ENCODE measurements at regions of chr1 and their contacts with region 1.

Region 1: DNA sequence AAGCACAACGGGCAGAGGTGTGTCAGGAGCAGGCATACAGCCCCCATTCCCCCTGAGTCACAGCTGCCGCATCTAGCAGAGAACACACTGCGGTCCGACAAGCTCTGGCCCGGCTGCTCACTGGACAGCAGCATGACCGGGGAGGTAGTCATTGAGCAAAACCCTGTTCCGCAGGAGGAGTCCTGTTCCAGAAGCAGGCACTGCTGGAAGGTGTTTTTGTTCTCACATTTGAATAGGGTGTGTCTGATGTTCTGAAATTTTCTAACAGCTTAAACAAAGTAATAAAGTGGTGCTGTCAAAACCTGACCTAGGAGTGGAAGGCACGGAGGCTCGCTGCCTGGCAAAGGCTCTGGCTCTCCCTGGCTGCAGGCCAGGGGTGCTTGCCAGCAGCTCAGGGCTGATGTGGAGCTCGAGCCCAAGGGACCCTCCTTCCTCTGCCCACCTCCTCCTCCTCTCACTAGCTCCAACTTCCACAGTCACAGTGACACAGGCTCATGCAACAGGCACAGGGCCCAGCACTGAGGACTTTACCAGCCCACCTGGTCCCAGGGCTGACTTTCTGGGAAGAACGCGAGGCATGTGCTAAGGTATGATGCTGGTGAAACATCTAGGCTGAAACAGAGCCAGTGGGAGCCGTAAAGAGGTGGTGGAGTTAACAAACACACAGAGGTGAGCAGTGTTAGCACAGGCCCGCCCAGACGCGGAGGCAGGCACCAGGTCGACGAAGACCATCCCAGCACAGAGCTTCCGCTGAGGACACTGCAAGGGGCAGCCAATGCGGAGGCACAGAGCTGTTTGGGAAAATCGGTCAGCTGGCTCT is 118.6 kb upstream of the IFFO2 start:
- DNase-seq: peak; percentile 91
- H3K4me3 Mint-ChIP-seq: peak overlapping the region; percentile 11
- H3K27ac Mint-ChIP-seq: peak overlapping the region; percentile 90
- H3K4me1 Mint-ChIP-seq: peaks cover 21% of the 10 kb centered on the region
- H3K27me3 Mint-ChIP-seq: no peaks in the 10 kb centered on the region
- CTCF ChIP-seq: no peak

Region 2: DNA sequence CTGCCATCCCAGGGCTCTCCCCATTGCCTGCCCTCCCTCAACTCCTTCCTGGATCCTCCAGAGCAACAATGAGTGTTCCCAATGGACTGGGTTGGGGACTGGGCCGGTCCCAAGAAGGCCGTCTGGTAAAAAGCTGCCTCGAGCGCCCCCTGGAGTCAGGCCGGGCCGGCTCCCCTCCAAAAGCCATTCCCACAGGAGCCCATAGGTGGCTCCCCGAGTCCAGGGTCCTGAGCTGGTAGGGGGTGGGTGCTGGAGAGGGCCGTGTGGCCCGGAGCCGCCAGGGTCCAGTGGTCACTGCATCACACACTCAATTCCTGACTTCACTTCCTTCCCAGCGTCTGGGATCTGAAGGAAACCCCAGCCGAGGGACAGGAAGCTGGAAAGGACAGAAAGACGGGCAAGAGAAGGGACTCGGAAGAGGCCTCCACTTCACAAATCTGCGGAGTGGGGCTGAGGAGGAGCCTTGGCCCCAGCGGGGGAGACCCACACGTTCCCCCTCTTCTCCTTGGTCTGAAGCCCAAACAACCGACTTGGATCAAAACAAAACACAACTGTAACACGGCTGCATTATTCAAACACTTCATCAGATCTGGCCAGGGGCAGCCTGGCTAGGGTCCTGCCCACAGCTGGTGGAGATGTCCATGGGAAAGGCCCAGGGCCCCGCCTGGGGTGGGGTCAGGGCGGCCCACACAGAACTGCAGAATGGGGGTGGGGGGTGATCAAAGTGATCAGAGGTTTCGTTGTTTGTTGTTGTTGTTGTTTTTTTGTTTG is 161.9 kb before region 1 on chr1:
- CTCF ChIA-PET with region 1: interaction called, 24 read pairs
- POLR2A ChIA-PET with region 1: interaction called, 17 read pairs
- intact Hi-C with region 1: loop called (anchors 2 kb)
- DNase-seq: peak; percentile 78
- H3K4me3 Mint-ChIP-seq: no peak overlapping the region
- H3K27ac Mint-ChIP-seq: no peak overlapping the region
- H3K4me1 Mint-ChIP-seq: no peaks in the 10 kb centered on the region
- H3K27me3 Mint-ChIP-seq: no peaks in the 10 kb centered on the region
- CTCF ChIP-seq: peak; percentile 99

Region 3: GRCh38 chr1:18949686-18950400 is 125.3 kb before region 1 on chr1:
- CTCF ChIA-PET with region 1: no interaction called
- POLR2A ChIA-PET with region 1: interaction called, 74 read pairs
- intact Hi-C with region 1: loop called (anchors 2 kb)
- DNase-seq: peak; percentile 48
- H3K4me3 Mint-ChIP-seq: peak overlapping the region; percentile 64
- H3K27ac Mint-ChIP-seq: peak overlapping the region; percentile 88
- H3K4me1 Mint-ChIP-seq: peaks cover 59% of the 10 kb centered on the region
- H3K27me3 Mint-ChIP-seq: no peaks in the 10 kb centered on the region
- CTCF ChIP-seq: no peak

Region 4: GRCh38 chr1:18965206-18966173 is 109.6 kb before region 1 on chr1:
- CTCF ChIA-PET with region 1: interaction called, 7 read pairs
- POLR2A ChIA-PET with region 1: interaction called, 35 read pairs
- intact Hi-C with region 1: no loop called
- DNase-seq: peak; percentile 73
- H3K4me3 Mint-ChIP-seq: no peak overlapping the region
- H3K27ac Mint-ChIP-seq: no peak overlapping the region
- H3K4me1 Mint-ChIP-seq: peaks cover 32% of the 10 kb centered on the region
- H3K27me3 Mint-ChIP-seq: peaks cover 4% of the 10 kb centered on the region
- CTCF ChIP-seq: no peak

Region 5: DNA sequence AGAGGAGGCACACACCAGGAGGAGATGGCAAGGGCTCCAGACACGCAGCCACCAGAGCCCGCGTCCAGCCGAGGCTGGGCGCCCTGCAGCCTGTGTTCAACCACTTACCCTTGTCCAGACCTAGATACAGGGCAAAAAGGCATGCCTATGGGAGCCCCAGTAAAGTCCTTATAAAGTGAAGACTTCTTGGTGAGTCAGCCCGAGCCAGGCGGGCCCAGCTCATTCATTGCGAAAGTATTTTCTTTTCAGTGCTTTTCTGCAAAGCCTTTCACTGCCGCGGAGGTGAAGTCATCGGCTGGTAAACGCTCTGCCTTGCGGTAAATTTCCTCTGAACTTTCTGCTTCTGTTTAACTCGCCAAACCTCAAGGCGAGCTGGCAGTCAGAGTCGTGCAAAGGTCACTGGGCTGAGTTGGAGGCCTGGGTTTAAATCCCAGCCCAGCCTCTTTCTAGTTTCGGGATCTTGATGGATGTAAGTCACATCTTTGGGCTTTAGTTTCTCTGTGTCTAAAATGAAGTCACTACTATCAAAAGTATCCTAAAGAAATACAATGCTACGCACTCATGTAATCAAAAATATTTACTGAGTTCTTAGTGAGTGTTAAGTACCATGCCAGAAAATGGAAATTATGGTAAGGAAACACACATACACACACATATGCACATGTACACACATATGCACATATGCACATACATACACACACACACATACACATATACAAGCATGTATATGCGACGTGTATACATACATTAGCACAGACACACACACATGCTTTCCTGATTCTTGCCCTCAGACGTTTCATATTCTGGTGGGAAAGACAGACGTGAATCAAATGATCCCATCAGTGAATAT is 63.9 kb before region 1 on chr1:
- CTCF ChIA-PET with region 1: no interaction called
- POLR2A ChIA-PET with region 1: interaction called, 28 read pairs
- intact Hi-C with region 1: no loop called
- DNase-seq: peak; percentile 96
- H3K4me3 Mint-ChIP-seq: no peak overlapping the region
- H3K27ac Mint-ChIP-seq: peak overlapping the region; percentile 85
- H3K4me1 Mint-ChIP-seq: peaks cover 23% of the 10 kb centered on the region
- H3K27me3 Mint-ChIP-seq: no peaks in the 10 kb centered on the region
- CTCF ChIP-seq: no peak

Measured in MCF 10A (cell line).